ENCODE measurements at regions of chr16 and their contacts with region 1.

Region 1: GRCh38 chr16:90022209-90023064 is 3.2 kb upstream of the DBNDD1 start:
- DNase-seq: peak; percentile 90 to 91
- ATAC-seq: peak; percentile 69 to 87
- H3K4me3 ChIP-seq: peak overlapping the region; percentile 76
- H3K27ac ChIP-seq: peak overlapping the region; percentile 88 to 98
- H3K4me1 ChIP-seq: peaks cover 34% of the 10 kb centered on the region
- CTCF ChIP-seq: no peak
- EP300 ChIP-seq: no peak
- POLR2A ChIP-seq: peak; percentile 70
- RAD21 ChIP-seq: no peak

Region 2: GRCh38 chr16:89798832-89799370 is 223.5 kb before region 1 on chr16:
- CTCF ChIA-PET with region 1: no interaction called
- POLR2A ChIA-PET with region 1: no interaction called
- DNase-seq: no peak
- ATAC-seq: peak in 1 of 2 experiments; percentile 30; a peak in 2 of 6 replicates
- H3K4me3 ChIP-seq: no peak overlapping the region
- H3K27ac ChIP-seq: no peak overlapping the region
- H3K4me1 ChIP-seq: no peaks in the 10 kb centered on the region
- CTCF ChIP-seq: no peak
- EP300 ChIP-seq: no peak
- POLR2A ChIP-seq: no peak
- RAD21 ChIP-seq: no peak

Region 3: GRCh38 chr16:89811326-89811725 is 211.1 kb before region 1 on chr16:
- CTCF ChIA-PET with region 1: no interaction called
- POLR2A ChIA-PET with region 1: no interaction called
- DNase-seq: no peak
- ATAC-seq: no peak
- H3K4me3 ChIP-seq: no peak overlapping the region
- H3K27ac ChIP-seq: no peak overlapping the region
- H3K4me1 ChIP-seq: peaks cover 4% of the 10 kb centered on the region; the same call in 1 of the 3 replicates
- CTCF ChIP-seq: no peak
- EP300 ChIP-seq: no peak
- POLR2A ChIP-seq: no peak
- RAD21 ChIP-seq: no peak

Region 4: DNA sequence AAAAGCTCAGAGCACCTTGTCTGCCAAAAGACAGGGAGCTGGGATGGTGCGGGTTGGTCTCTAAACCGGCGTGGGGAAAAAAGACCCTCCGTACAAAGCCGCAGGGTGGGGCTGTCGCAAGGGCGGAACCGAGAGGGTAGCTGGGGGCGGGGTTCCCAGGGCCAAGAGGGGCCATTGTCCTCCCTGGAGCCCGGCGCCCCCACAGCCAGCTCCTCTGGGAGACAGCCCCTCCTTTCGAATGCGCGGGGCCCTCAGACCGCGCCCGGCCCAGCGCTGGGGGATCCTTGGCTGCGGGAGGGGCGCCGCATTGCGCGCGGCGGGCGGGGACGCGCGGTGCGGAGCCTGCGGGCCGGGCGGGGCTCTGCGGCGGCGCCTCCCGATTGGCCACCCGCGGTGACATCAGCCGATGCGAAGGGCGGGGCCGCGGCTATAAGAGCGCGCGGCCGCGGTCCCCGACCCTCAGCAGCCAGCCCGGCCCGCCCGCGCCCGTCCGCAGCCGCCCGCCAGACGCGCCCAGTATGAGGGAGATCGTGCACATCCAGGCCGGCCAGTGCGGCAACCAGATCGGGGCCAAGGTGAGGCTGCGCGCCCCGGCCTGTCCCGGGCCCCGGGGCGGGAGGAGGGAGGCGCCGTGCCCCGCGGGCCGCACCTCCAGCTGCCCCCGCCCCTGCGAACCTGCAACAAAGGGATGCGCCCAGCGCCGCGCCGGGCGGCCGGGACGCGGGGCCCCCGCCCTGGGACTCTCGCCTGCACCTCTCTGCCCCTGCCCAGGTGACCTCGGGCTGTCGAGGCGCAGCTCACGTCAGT is 99.3 kb before region 1 on chr16 and contains the start of gene TUBB3:
- CTCF ChIA-PET with region 1: interaction called, 5 read pairs
- POLR2A ChIA-PET with region 1: interaction called, 17 read pairs
- DNase-seq: peak; percentile 80 to 94
- ATAC-seq: peak; percentile 15 to 24
- H3K4me3 ChIP-seq: peak within 1 kb of the TSS; percentile 83
- H3K27ac ChIP-seq: peak within 1 kb of the TSS; percentile 98 to 99
- H3K4me1 ChIP-seq: peaks cover 53% of the 10 kb centered on the region
- CTCF ChIP-seq: no peak
- EP300 ChIP-seq: no peak
- POLR2A ChIP-seq: peak; percentile 99
- RAD21 ChIP-seq: no peak
- polyA plus RNA-seq, gene TUBB3: 48.8 and 48.9 TPM in 2 replicates

Region 5: DNA sequence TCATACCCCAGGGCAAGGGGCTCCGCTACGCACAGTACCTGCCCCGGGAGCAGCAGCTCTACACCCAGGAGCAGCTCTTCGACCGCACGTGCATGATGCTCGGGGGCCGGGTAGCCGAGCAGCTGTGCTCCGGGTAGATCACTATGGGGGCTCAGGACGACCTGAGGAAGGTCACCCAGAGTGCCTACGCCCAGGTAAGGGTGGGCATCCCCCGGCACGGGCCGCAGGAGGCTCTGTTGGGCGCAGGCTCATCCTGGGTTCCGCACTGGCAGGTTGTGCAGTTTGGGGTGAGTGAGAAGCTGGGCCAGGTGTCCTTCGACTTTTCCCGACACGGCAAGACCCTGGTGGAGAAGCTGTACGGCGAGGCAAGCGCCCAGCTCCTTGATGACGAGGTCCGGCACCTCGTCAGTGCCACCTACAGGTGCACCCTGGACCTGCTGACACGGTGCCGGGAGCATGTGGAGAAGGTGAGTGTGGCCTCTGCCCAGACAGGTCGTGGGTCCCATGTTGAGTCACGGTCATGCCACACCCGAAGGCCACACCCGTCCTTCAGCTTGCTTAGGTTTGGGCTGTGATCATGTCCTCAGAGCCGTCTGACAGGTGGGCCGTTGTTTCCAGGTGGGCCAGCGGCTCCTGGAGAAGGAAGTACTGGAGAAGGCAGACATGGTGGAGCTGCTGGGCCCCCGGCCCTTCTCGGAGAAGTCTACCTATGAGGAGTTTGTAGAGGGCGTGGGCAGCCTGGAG is 22.4 kb before region 1 on chr16:
- CTCF ChIA-PET with region 1: interaction called, 24 read pairs
- POLR2A ChIA-PET with region 1: interaction called, 5 read pairs
- DNase-seq: no peak
- ATAC-seq: peak in 1 of 2 experiments; percentile 9; a peak in 2 of 6 replicates
- H3K4me3 ChIP-seq: no peak overlapping the region
- H3K27ac ChIP-seq: no peak overlapping the region
- H3K4me1 ChIP-seq: no peaks in the 10 kb centered on the region
- CTCF ChIP-seq: no peak
- EP300 ChIP-seq: no peak
- POLR2A ChIP-seq: no peak
- RAD21 ChIP-seq: no peak

Region 6: DNA sequence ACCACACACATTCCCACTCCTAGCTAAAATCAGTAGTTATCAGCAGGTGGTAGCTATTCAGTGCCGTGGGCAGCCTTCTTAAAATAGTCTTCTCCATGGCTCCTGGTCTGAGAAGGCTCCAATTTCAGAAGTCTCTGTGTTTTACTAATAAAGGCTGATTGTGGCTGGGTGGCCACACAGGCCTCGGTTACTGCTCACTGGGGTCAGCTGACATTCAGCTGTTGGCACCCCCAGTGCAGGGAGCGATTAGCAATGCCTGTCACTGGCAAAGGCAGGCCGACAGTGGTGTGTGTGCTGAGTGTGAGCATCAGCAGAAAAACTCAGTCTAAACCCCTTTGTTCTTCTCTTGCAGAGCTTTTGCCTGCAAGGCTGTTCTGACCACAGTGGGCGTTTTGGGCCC is 13.5 kb after region 1 on chr16:
- CTCF ChIA-PET with region 1: interaction called, 12 read pairs
- POLR2A ChIA-PET with region 1: interaction called, 3 read pairs
- DNase-seq: no peak
- ATAC-seq: no peak
- H3K4me3 ChIP-seq: no peak overlapping the region
- H3K27ac ChIP-seq: no peak overlapping the region
- H3K4me1 ChIP-seq: no peaks in the 10 kb centered on the region
- CTCF ChIP-seq: no peak
- EP300 ChIP-seq: no peak
- POLR2A ChIP-seq: no peak
- RAD21 ChIP-seq: no peak

Measured in A549 (cell line).